ENCODE measurements at regions of chr4 and their contacts with region 1.

Region 1: DNA sequence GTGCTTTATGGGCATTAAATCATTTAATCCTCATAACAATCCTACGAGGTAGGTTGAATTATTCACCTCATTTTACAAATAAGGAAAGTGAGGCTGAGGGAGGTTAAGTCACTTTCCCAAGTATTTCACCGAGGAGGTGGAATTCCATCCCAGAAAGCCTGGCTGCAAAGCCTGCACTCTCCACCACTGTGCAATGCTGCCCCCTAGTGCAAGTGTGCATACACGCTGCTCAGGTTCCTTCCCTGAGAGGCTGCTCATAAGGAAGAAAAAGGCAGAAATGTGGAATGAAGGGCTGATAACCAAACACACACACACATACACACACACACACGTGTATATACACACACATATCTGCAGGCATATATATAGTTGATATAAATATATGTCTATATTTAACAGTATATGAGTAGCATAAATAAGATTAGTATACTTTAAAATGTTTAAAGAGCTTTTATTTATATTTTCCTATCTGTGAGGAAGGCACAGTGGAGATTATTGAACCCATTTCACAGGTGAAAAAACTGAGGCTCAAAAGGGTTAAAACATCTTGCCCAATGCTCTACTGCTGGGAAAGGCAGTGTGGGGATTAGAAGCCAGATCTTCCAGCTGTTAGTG is 714.5 kb upstream of the TENM3 start:
- DNase-seq: peak; percentile 54
- ATAC-seq: peak; percentile 96
- H3K4me3 ChIP-seq: no peak overlapping the region
- H3K27ac ChIP-seq: no peak overlapping the region
- H3K4me1 ChIP-seq: no peaks in the 10 kb centered on the region
- H3K27me3 ChIP-seq: peaks cover 26% of the 10 kb centered on the region
- CTCF ChIP-seq: peak; percentile 78 to 92 (median 89)
- POLR2A ChIP-seq: no peak
- RAD21 ChIP-seq: peak; percentile 90

Region 2: DNA sequence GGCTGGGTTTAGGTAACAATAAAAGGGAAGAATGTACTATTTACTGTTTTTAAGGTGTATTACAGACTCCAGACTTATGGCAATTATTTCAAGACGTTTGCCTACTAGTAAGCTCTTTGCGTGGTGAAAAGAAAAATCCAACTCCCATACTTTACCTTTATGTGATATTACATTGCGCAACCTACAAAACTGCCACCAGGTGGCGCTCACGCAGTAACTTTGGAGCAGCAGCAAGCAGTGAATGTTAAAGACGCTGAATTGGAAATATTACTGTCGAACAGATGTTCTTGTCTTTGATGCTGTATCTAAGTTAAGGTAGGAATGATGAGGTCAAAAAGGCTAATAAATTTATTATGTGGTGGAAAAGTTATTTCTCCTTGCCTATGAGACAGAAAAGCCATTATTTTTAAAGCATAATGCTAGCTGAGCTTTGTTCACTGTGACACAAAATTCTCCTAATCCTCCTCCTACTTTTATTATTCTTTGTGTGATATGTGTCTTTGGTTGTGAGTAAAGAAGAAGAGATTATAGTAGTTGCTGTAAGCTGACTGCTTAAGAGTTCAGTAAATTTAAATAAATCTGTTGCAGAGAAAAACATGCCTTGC is 385.3 kb before region 1 on chr4:
- CTCF ChIA-PET with region 1: interaction called, 38 read pairs
- POLR2A ChIA-PET with region 1: no interaction called
- RAD21 ChIA-PET with region 1: interaction called, 5 to 9 read pairs
- intact Hi-C with region 1: loop called (anchors 1 kb)
- DNase-seq: peak; percentile 56
- ATAC-seq: peak; percentile 87
- H3K4me3 ChIP-seq: no peak overlapping the region
- H3K27ac ChIP-seq: no peak overlapping the region
- H3K4me1 ChIP-seq: no peaks in the 10 kb centered on the region
- H3K27me3 ChIP-seq: peaks cover 8% of the 10 kb centered on the region; the same call in 1 of the 2 replicates
- CTCF ChIP-seq: peak; percentile 69 to 91 (median 70)
- POLR2A ChIP-seq: no peak
- RAD21 ChIP-seq: peak; percentile 87

Region 3: DNA sequence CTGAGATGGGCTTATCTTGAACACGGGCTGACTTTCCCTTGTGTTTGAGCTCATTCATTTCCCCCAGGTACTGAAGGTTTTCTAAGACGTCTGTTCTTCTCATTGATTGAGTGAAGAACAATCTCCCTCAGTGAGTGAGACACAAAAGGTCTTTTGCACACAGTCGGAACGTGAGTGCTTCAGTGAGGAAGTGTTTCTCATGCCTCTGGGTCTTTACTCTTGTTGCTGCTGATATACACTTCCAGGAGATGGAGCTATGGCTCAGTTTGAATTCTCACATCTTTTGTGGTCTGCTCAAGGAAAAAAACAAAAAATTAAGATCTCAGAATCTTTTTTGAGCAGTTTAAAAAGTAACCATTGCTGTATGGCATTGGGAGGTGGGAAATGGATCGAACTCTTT is 267.4 kb before region 1 on chr4:
- CTCF ChIA-PET with region 1: interaction called, 15 read pairs
- POLR2A ChIA-PET with region 1: no interaction called
- RAD21 ChIA-PET with region 1: no interaction called
- intact Hi-C with region 1: loop called (anchors 1 kb)
- DNase-seq: no peak
- ATAC-seq: peak; percentile 69
- H3K4me3 ChIP-seq: no peak overlapping the region
- H3K27ac ChIP-seq: no peak overlapping the region
- H3K4me1 ChIP-seq: no peaks in the 10 kb centered on the region
- H3K27me3 ChIP-seq: no peaks in the 10 kb centered on the region
- CTCF ChIP-seq: peak; percentile 19 to 21 (median 20); a peak in 2 of 6 replicates
- POLR2A ChIP-seq: no peak
- RAD21 ChIP-seq: peak; percentile 25; the same call in 1 of the 2 replicates

Region 4: DNA sequence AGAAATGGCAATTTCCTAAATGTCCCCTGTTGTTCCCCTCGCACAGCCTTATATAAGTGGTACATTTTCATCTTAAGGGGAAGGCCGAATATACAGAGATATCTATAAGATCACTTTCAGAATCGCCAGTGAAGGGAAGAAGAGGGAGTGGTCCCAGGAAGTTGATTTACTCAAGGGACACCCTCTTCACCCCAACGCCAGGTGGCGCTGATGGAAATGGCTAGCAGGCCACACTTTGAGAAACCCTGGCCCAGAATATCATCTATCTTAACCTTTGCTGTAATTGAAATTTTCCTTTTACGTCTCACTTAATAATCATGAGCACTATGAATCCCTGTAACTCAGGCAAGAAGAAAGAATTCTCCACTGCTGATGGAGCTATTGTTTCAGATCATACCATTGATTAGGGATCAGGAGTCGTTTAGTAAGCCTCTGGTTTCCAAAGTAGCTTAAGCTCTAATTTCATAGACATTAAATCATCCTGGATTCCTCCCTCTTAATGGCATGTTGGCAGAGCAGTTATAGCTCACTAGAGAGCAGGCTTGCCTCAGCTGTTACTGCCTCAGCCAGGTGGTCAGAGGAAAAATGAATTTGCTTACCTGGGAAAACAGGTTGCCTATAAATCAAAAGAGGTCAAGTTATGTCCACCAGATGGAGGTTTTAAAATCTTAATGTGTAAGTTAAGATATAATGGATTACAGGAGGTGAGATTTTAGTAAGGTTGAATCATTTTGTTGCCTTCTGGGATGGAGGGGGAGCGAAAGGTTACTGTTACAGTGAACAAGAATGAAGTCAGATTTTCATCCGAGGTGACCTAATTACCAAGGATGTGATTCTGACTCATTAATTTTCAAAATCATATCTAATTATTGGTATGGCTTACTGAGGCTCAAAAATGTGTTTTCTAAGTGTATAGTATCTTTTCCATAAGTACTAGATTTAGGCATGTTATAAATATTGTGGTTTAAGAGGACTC is 226.7 kb before region 1 on chr4:
- CTCF ChIA-PET with region 1: interaction called, 50 read pairs
- POLR2A ChIA-PET with region 1: no interaction called
- RAD21 ChIA-PET with region 1: interaction called, 3 to 4 read pairs
- intact Hi-C with region 1: loop called (anchors 1 kb)
- DNase-seq: peak; percentile 41
- ATAC-seq: peak; percentile 92
- H3K4me3 ChIP-seq: no peak overlapping the region
- H3K27ac ChIP-seq: no peak overlapping the region
- H3K4me1 ChIP-seq: no peaks in the 10 kb centered on the region
- H3K27me3 ChIP-seq: no peaks in the 10 kb centered on the region
- CTCF ChIP-seq: peak; percentile 40 to 85 (median 75); a peak in 5 of 6 replicates
- POLR2A ChIP-seq: no peak
- RAD21 ChIP-seq: peak; percentile 58

Region 5: DNA sequence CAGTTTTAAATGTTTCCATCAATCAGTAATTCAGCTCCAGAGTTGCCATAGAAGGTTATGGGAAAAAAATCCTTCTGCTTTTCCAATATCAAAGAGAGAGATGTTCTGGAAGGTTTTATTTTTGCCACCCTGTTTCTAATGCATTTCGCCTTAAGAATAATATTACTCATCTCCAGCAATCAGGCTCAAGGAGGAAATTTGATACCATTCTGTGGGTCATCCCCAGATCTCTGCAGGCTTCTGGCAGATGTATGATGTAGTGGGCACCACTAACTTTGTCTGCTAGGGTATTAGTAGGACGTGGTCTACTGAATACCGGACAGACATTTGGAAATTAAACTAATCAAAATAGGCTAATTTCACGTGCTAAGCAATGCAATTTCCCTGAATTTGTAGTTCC is 69.1 kb after region 1 on chr4:
- CTCF ChIA-PET with region 1: no interaction called
- POLR2A ChIA-PET with region 1: no interaction called
- RAD21 ChIA-PET with region 1: no interaction called
- intact Hi-C with region 1: no loop called
- DNase-seq: no peak
- ATAC-seq: no peak
- H3K4me3 ChIP-seq: no peak overlapping the region
- H3K27ac ChIP-seq: no peak overlapping the region
- H3K4me1 ChIP-seq: no peaks in the 10 kb centered on the region
- H3K27me3 ChIP-seq: no peaks in the 10 kb centered on the region
- CTCF ChIP-seq: no peak
- POLR2A ChIP-seq: no peak
- RAD21 ChIP-seq: no peak